ENCODE measurements at regions of chr7 and their contacts with region 1.

Region 1: DNA sequence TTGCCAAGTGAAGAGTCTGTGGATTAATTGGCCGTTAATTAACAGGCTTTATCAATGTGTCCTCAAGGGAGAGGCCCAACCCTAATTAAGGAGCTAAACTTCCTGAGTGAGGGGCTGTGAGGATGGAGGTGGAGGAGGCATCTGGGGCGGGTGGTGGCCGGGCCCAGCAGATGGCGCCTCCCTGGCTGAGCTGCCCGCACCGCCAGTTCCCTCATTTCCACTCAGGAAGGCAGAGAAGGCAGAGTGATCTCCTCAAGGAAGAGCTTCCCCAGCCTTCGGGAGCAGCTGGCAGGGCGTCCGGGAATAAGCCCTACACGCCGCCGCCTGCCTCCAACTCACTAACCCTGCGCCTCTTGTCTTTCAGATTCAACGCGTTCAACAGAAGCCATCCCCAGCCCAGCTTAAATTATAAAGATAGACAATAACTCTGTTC is 112.2 kb downstream of the CYTH3 start:
- DNase-seq: no peak
- ATAC-seq: peak; percentile 51
- H3K4me3 ChIP-seq: no peak overlapping the region
- H3K27ac ChIP-seq: no peak overlapping the region
- H3K4me1 ChIP-seq: no peaks in the 10 kb centered on the region
- H3K27me3 ChIP-seq: no peaks in the 10 kb centered on the region
- CTCF ChIP-seq: peak; percentile 68
- EP300 ChIP-seq: no peak
- POLR2A ChIP-seq: no peak
- RAD21 ChIP-seq: peak; percentile 65

Region 2: GRCh38 chr7:6323967-6324701 is 163.9 kb after region 1 on chr7:
- CTCF ChIA-PET with region 1: interaction called, 23 read pairs
- POLR2A ChIA-PET with region 1: no interaction called
- in situ Hi-C with region 1: loop called (anchors 5 kb)
- intact Hi-C with region 1: loop called (anchors 1 kb)
- DNase-seq: no peak
- ATAC-seq: no peak
- H3K4me3 ChIP-seq: no peak overlapping the region
- H3K27ac ChIP-seq: no peak overlapping the region
- H3K4me1 ChIP-seq: no peaks in the 10 kb centered on the region
- H3K27me3 ChIP-seq: no peaks in the 10 kb centered on the region
- CTCF ChIP-seq: no peak
- EP300 ChIP-seq: no peak
- POLR2A ChIP-seq: no peak
- RAD21 ChIP-seq: no peak

Region 3: GRCh38 chr7:6435486-6436384 is 275.5 kb after region 1 on chr7:
- CTCF ChIA-PET with region 1: no interaction called
- POLR2A ChIA-PET with region 1: no interaction called
- in situ Hi-C with region 1: loop called (anchors 10 kb)
- intact Hi-C with region 1: no loop called
- DNase-seq: peak; percentile 50
- ATAC-seq: peak; percentile 88
- H3K4me3 ChIP-seq: no peak overlapping the region
- H3K27ac ChIP-seq: no peak overlapping the region
- H3K4me1 ChIP-seq: no peaks in the 10 kb centered on the region
- H3K27me3 ChIP-seq: no peaks in the 10 kb centered on the region
- CTCF ChIP-seq: peak; percentile 89
- EP300 ChIP-seq: no peak
- POLR2A ChIP-seq: no peak
- RAD21 ChIP-seq: peak; percentile 80